Activated CD4-positive, alpha-beta T cell treated with anti-CD3 and anti-CD28 coated beads for 36 hours (primary cell): ENCODE measurements at regions of chr9 and their contacts with region 1.

Region 1: DNA sequence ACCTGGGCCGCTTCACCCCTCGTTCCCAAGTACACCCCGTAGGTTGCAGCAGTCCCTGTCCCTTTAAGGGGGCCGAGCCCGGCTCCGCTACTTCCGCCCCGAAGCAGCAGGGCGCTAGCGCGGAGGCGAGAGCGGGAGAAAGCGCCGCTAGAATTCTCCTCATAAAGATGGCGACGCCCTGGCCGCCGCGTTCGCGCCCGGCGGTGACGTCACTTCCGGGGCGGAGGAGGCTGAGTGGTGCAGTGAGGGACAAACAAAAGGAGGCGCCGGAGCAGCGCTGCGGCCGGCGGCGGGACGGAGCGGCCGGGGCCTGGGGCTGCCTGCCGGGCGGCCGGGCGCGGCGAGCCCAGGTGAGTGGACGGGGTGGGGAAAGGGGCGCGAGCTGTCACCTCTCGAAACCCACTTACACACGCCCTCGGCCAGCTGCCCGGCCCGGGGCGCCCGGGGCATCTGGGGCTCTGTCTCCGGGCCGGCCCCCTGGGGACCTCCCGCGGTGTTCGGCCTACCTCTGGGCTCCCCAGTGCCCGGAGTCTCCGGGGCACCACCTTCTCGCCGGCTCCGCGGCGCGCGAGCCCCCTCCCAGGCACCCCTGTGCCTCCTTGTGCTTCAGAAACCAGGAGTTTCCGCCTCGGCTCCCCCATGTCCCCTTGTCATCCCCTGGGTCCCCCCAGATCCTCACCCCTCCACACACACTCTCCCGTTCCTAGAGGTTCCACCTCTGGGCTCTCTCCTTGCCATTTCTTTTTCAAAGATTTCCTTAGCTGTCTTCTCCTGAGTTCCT is at the starts of genes KYAT1 and LRRC8A:
- DNase-seq: peak; percentile 99
- ATAC-seq: peak; percentile 95
- H3K4me3 Mint-ChIP-seq: peak within 1 kb of the TSS; percentile 94
- H3K27ac Mint-ChIP-seq: peak within 1 kb of the TSS; percentile 91
- H3K4me1 Mint-ChIP-seq: peaks cover 56% of the 10 kb centered on the region
- H3K27me3 Mint-ChIP-seq: no peaks in the 10 kb centered on the region
- total RNA-seq, gene KYAT1: 14.8 to 18.5 TPM
- total RNA-seq, gene LRRC8A: 14.9 to 15.5 TPM

Region 2: GRCh38 chr9:128339771-128340690 is 542.1 kb before region 1 on chr9 and contains the start of gene SLC27A4:
- CTCF ChIA-PET with region 1: no interaction called
- POLR2A ChIA-PET with region 1: no interaction called
- intact Hi-C with region 1: loop called in 1 of 2 experiments (anchors 1 kb)
- DNase-seq: peak; percentile 88
- ATAC-seq: peak; percentile 93
- H3K4me3 Mint-ChIP-seq: peak within 1 kb of the TSS; percentile 88
- H3K27ac Mint-ChIP-seq: peak within 1 kb of the TSS; percentile 83
- H3K4me1 Mint-ChIP-seq: peaks cover 6% of the 10 kb centered on the region
- H3K27me3 Mint-ChIP-seq: no peaks in the 10 kb centered on the region
- total RNA-seq, gene SLC27A4: 8.4 to 10.2 TPM

Region 3: DNA sequence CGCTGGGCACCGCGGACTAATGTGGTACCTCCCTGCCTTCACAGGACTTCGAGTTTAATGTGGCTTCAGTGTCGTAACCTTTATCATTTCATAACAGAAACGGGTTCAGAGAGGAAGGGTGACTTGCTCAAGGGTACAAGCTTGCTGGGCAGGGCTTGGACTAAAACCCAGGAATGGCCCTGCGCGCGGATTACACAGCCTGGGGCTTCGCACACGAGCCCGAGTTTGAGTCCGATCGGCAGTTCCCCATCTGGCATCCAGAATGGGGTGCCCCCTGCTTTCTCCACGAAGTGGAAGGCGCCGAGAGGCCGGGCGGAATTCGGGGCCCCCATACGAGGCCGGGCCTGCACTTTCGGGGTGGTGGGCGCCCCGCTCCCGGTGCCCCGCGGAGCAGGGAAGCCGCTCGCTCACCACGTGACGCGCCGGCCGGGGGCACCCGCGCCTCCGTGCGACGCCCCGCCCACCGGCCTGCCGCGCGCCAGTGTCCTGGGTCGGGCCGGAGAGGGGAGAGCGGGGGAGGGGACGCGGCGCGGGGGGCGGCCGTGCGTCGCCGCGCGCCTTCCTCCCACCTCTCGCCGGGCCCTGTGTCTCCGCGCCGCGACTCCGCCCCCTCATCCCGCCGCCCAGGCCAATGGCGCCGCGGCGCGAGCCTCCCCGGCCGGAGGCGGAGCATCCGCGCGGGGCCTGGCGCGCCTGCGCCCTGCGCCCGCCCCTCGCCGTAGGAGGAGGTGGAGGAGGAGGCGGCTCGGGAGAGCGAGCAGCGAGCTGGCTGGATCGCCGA is 193.4 kb before region 1 on chr9 and contains the start of gene SET:
- CTCF ChIA-PET with region 1: no interaction called
- POLR2A ChIA-PET with region 1: no interaction called
- intact Hi-C with region 1: loop called in 1 of 2 experiments (anchors 1 kb)
- DNase-seq: peak; percentile 96
- ATAC-seq: peak; percentile 71
- H3K4me3 Mint-ChIP-seq: peak within 1 kb of the TSS; percentile 99
- H3K27ac Mint-ChIP-seq: peak within 1 kb of the TSS; percentile 94
- H3K4me1 Mint-ChIP-seq: peaks cover 61% of the 10 kb centered on the region
- H3K27me3 Mint-ChIP-seq: no peaks in the 10 kb centered on the region
- total RNA-seq, gene SET: 673 to 682 TPM

Region 4: DNA sequence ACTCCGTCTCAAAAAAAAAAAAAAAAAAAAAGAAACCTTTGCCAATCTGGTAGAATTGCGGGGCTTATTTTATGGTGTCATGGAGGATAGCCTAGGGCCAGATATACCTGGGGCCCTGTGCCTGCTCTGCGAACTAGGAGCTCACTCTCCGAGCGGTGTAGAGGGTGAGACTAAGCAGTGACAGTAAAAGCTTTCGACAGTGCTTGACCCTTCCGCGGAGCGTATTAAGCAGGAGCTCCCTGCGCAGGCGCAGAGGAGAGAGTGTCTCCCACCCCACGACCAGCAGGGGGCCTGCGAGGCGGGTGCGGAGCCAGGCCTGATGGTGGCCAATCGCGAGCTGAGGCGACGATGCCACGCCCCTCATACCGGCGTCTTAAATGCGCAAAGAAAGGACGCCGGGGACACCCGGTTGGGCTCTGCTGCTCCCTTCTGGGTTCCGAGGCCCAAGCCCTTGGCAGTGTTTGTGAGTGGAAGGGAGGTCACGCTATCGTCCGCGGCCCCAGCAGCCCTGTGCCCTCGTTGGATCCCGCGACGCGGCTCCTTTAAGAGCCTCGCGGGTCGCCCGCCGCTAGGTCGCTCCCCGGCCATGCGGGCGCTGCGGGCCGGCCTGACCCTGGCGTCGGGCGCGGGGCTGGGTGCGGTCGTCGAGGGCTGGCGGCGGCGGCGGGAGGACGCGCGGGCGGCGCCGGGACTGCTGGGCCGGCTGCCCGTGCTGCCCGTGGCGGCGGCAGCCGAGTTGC is 63.8 kb before region 1 on chr9 and contains the start of gene ENDOG:
- CTCF ChIA-PET with region 1: interaction called, 6 read pairs
- POLR2A ChIA-PET with region 1: interaction called, 4 read pairs
- intact Hi-C with region 1: loop called (anchors 1 to 5 kb)
- DNase-seq: peak; percentile 98
- ATAC-seq: peak; percentile 98
- H3K4me3 Mint-ChIP-seq: peak within 1 kb of the TSS; percentile 76
- H3K27ac Mint-ChIP-seq: peak within 1 kb of the TSS; percentile 80
- H3K4me1 Mint-ChIP-seq: peaks cover 13% of the 10 kb centered on the region
- H3K27me3 Mint-ChIP-seq: no peaks in the 10 kb centered on the region
- total RNA-seq, gene ENDOG: 7.3 to 9.3 TPM

Region 5: DNA sequence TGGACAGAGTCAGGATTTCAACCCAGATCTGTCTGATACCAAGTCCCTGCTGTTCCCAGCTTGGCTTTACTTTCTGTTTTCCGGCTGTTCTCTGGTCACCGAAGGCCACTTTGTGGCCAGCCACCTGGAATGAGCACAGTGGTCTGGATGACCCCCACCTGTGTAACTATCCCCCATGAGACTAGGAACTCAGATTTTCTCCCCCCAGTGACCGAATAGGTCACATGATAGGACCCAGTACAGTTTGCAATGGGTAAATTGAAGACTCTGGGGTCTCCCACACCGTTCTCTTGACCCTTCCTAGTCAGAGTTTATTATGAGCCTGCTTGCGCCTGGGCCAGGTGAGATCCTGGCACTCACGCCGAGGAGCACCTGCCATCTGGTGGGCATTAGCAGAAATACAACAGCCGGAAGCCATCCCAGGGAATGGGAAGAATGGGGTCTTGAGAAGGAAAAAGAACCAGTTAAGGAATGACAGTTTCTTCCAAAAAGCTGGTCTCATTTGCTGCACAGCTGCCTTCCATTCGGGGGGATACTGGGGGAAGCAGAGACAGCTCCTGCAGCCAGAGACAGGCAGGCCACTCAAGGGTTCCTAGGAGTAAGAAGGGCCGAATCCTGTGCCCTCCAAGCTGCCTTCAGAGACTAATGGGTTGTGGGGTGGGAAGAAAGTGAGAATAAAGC is 45.8 kb after region 1 on chr9:
- CTCF ChIA-PET with region 1: interaction called, 8 read pairs
- POLR2A ChIA-PET with region 1: no interaction called
- intact Hi-C with region 1: loop called (anchors 1 to 5 kb)
- DNase-seq: peak; percentile 73
- ATAC-seq: peak; percentile 81
- H3K4me3 Mint-ChIP-seq: no peak overlapping the region
- H3K27ac Mint-ChIP-seq: peak overlapping the region; percentile 6
- H3K4me1 Mint-ChIP-seq: peaks cover 9% of the 10 kb centered on the region
- H3K27me3 Mint-ChIP-seq: no peaks in the 10 kb centered on the region

Region 6: GRCh38 chr9:129052592-129052991 is 170.5 kb after region 1 on chr9:
- CTCF ChIA-PET with region 1: no interaction called
- POLR2A ChIA-PET with region 1: no interaction called
- intact Hi-C with region 1: no loop called
- DNase-seq: no peak
- ATAC-seq: no peak
- H3K4me3 Mint-ChIP-seq: no peak overlapping the region
- H3K27ac Mint-ChIP-seq: no peak overlapping the region
- H3K4me1 Mint-ChIP-seq: no peaks in the 10 kb centered on the region
- H3K27me3 Mint-ChIP-seq: no peaks in the 10 kb centered on the region

Region 7: DNA sequence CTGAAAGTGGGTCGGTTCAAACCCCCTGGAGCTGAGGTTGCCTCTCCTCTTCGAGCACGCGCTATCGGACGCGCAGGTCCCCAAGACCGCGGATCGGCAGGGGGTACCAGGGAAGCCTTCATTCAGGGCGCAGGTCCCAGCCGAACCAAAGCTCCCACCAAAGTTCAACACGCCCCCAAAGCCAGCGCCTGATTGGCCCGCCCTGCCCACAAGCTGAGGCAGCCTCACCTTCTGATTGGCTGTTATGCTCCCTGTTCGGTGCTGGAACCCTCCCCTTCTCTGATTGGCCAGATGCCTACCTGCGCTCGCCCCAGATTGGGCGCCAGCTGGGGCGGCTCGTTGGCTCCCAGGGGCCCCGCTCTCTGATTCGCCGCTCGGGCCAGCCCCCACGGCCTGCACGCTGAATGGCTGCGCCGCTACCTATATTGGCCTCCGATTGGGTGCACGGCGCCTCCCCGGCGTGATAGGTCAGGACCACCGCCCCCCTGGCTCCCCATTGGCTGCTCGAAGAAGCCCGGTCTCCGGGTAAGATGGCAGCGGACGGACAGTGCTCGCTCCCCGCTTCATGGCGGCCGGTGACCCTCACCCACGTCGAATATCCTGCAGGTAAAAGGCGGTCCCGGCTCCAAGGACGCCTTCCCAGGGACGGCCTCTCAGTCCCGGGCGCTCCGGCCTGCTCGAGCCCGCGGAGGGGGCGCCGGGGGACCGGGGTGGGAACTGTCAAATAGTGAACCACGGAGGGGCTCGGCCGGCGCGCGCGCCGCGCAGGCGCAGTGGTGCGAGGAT is 198.7 kb after region 1 on chr9 and contains the start of gene DOLPP1:
- CTCF ChIA-PET with region 1: no interaction called
- POLR2A ChIA-PET with region 1: no interaction called
- intact Hi-C with region 1: loop called in 1 of 2 experiments (anchors 1 kb)
- DNase-seq: peak; percentile 99
- ATAC-seq: peak; percentile 98
- H3K4me3 Mint-ChIP-seq: peak within 1 kb of the TSS; percentile 83
- H3K27ac Mint-ChIP-seq: peak within 1 kb of the TSS; percentile 63
- H3K4me1 Mint-ChIP-seq: peaks cover 20% of the 10 kb centered on the region
- H3K27me3 Mint-ChIP-seq: no peaks in the 10 kb centered on the region
- total RNA-seq, gene DOLPP1: 15.1 to 16.4 TPM